ENCODE measurements at regions of chr3 and their contacts with region 1.

Region 1: GRCh38 chr3:136752422-136753325 is 496 bp upstream of the STAG1 start:
- DNase-seq: peak; percentile 100
- ATAC-seq: peak; percentile 83
- H3K4me3 ChIP-seq: peak overlapping the region; percentile 88 to 98 (median 93)
- H3K4me3 Mint-ChIP-seq: peak overlapping the region; percentile 90
- H3K27ac ChIP-seq: peak overlapping the region; percentile 99 to 100
- H3K27ac Mint-ChIP-seq: peak overlapping the region; percentile 97
- H3K4me1 ChIP-seq: peaks cover 25 to 30% of the 10 kb centered on the region in 2 donors
- H3K4me1 Mint-ChIP-seq: peaks cover 42% of the 10 kb centered on the region
- H3K27me3 ChIP-seq: no peaks in the 10 kb centered on the region
- H3K27me3 Mint-ChIP-seq: no peaks in the 10 kb centered on the region
- CTCF ChIP-seq: peak; percentile 23

Region 2: GRCh38 chr3:136196401-136197158 is 556.1 kb before region 1 on chr3:
- CTCF ChIA-PET with region 1: interaction called, 22 read pairs
- POLR2A ChIA-PET with region 1: interaction called, 52 read pairs
- intact Hi-C with region 1: loop called (anchors 1 kb)
- DNase-seq: peak; percentile 99
- ATAC-seq: peak; percentile 68
- H3K4me3 ChIP-seq: peak overlapping the region; percentile 65 to 95 (median 86)
- H3K4me3 Mint-ChIP-seq: peak overlapping the region; percentile 97
- H3K27ac ChIP-seq: peak overlapping the region; percentile 91 to 99
- H3K27ac Mint-ChIP-seq: peak overlapping the region; percentile 100
- H3K4me1 ChIP-seq: peaks cover 34 to 36% of the 10 kb centered on the region in 2 donors
- H3K4me1 Mint-ChIP-seq: peaks cover 36% of the 10 kb centered on the region
- H3K27me3 ChIP-seq: no peaks in the 10 kb centered on the region
- H3K27me3 Mint-ChIP-seq: no peaks in the 10 kb centered on the region
- CTCF ChIP-seq: no peak

Region 3: GRCh38 chr3:136390574-136390973 is 362.1 kb before region 1 on chr3:
- CTCF ChIA-PET with region 1: interaction called, 51 read pairs
- POLR2A ChIA-PET with region 1: interaction called, 3 read pairs
- intact Hi-C with region 1: loop called (anchors 1 kb)
- DNase-seq: no peak
- ATAC-seq: no peak
- H3K4me3 ChIP-seq: no peak overlapping the region
- H3K4me3 Mint-ChIP-seq: no peak overlapping the region
- H3K27ac ChIP-seq: no peak overlapping the region
- H3K27ac Mint-ChIP-seq: no peak overlapping the region
- H3K4me1 ChIP-seq: no peaks in the 10 kb centered on the region
- H3K4me1 Mint-ChIP-seq: peaks cover 5% of the 10 kb centered on the region
- H3K27me3 ChIP-seq: no peaks in the 10 kb centered on the region
- H3K27me3 Mint-ChIP-seq: no peaks in the 10 kb centered on the region
- CTCF ChIP-seq: no peak

Region 4: DNA sequence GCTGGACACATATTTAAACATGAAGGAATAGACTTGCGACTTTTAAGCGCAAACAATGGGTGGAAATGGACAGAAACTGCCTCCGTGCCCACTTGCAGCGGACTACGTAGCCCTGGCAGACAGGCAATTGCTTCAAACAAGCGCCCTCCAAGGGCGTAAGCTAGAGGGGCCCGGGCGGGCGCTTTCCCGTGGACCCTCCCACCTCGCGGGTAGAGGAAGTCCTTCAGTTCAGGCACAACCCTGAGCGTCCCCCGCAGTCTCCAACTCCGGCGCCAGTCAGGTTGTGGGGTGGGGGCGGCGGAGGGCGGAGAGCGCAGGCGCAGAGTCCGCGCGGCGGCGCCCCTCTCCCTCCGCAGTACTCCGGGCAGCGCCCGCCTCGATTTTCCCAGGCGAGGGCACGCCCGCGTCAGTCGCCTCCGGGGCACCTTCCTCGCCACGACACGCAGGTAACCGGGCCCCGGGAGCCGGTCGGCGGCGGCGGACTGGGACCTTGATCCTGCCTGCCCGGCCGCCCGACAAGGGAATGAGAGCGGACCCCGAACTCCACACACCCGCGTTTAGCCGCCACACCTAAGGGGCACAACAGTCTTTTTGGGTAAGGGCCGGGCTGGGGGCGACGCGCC is 66.2 kb after region 1 on chr3 and contains the start of gene SLC35G2:
- CTCF ChIA-PET with region 1: interaction called, 7 read pairs
- POLR2A ChIA-PET with region 1: no interaction called
- intact Hi-C with region 1: loop called (anchors 1 kb)
- DNase-seq: peak; percentile 38
- ATAC-seq: peak; percentile 68
- H3K4me3 ChIP-seq: peak within 1 kb of the TSS; percentile 43 to 66 (median 58)
- H3K4me3 Mint-ChIP-seq: peak within 1 kb of the TSS; percentile 95
- H3K27ac ChIP-seq: no peak within 1 kb of the TSS
- H3K27ac Mint-ChIP-seq: peak within 1 kb of the TSS; percentile 89
- H3K4me1 ChIP-seq: peaks cover 21 to 22% of the 10 kb centered on the region in 2 donors
- H3K4me1 Mint-ChIP-seq: peaks cover 23% of the 10 kb centered on the region
- H3K27me3 ChIP-seq: peaks cover 0 to 40% (median 31%) of the 10 kb centered on the region in 4 experiments
- H3K27me3 Mint-ChIP-seq: peaks cover 30% of the 10 kb centered on the region
- CTCF ChIP-seq: no peak
- total RNA-seq, gene SLC35G2: 6.3 and 9.4 TPM in 2 replicates

Region 5: GRCh38 chr3:138186803-138187295 is 1434.2 kb after region 1 on chr3:
- CTCF ChIA-PET with region 1: no interaction called
- POLR2A ChIA-PET with region 1: no interaction called
- intact Hi-C with region 1: loop called (anchors 5 kb)
- DNase-seq: peak; percentile 94
- ATAC-seq: peak; percentile 94
- H3K4me3 ChIP-seq: peak overlapping the region; percentile 79 to 98 (median 94)
- H3K4me3 Mint-ChIP-seq: peak overlapping the region; percentile 97
- H3K27ac ChIP-seq: peak overlapping the region; percentile 85 to 89
- H3K27ac Mint-ChIP-seq: peak overlapping the region; percentile 97
- H3K4me1 ChIP-seq: peaks cover 8 to 17% of the 10 kb centered on the region in 2 donors
- H3K4me1 Mint-ChIP-seq: peaks cover 34% of the 10 kb centered on the region
- H3K27me3 ChIP-seq: peaks cover 0 to 19% (median 7%) of the 10 kb centered on the region in 4 experiments
- H3K27me3 Mint-ChIP-seq: peaks cover 15% of the 10 kb centered on the region
- CTCF ChIP-seq: no peak

Measured in B cell (primary cell).